ENCODE measurements at regions of chr20 and their contacts with region 1.

Region 1: DNA sequence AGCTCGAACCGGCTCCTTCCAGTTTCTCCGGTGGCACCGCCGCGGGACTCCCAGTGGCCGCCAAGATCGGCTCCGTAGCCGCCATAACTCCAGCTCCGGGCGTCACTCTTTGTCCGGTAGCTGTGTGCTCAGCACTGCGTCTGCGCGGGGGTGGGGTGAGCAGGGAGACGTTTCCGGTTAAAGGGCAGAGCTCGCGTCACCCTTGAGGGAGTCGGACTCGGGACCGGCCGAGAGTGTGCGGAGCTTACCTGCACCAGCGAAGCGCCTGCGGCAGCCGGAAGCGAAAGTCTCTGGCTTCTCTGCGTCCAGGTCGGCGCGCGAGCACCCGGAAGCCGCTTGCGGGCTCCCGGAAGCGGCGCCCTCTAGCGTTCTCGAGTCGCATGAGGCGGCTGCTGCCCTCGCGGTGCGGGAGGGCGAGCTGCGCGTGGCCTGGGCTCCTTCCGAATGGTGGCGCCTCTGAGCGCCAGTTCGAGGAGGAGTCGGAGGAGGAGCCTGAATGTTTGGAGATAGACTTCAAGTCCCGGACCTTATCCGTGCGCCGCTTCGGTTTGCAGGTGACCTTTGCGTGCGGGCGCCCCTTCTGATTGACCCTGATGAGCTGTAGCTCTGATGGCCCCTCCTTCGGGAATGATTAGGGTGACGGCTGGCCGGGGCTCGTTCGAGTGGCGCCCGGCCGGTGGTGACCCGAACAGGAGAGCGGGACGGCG is at the start of gene SCAND1:
- DNase-seq: peak; percentile 99
- ATAC-seq: peak; percentile 89
- H3K4me3 Mint-ChIP-seq: peak within 1 kb of the TSS; percentile 98
- H3K27ac Mint-ChIP-seq: peak within 1 kb of the TSS; percentile 100
- H3K4me1 Mint-ChIP-seq: peaks cover 16% of the 10 kb centered on the region
- H3K27me3 Mint-ChIP-seq: no peaks in the 10 kb centered on the region
- CTCF ChIP-seq: peak; percentile 93
- total RNA-seq, gene SCAND1: 46.4 to 49.2 TPM

Region 2: GRCh38 chr20:35741892-35742740 is 212.2 kb before region 1 on chr20 and contains the start of gene RBM39:
- CTCF ChIA-PET with region 1: interaction called, 20 read pairs
- POLR2A ChIA-PET with region 1: interaction called, 19 read pairs
- intact Hi-C with region 1: no loop called
- DNase-seq: peak; percentile 100
- ATAC-seq: peak; percentile 89
- H3K4me3 Mint-ChIP-seq: peak within 1 kb of the TSS; percentile 92
- H3K27ac Mint-ChIP-seq: peak within 1 kb of the TSS; percentile 99
- H3K4me1 Mint-ChIP-seq: peaks cover 38% of the 10 kb centered on the region
- H3K27me3 Mint-ChIP-seq: no peaks in the 10 kb centered on the region
- CTCF ChIP-seq: no peak
- total RNA-seq, gene RBM39: 317 to 321 TPM

Region 3: GRCh38 chr20:35771689-35772562 is 182.4 kb before region 1 on chr20 and contains the start of gene PHF20:
- CTCF ChIA-PET with region 1: interaction called, 11 read pairs
- POLR2A ChIA-PET with region 1: interaction called, 17 read pairs
- intact Hi-C with region 1: no loop called
- DNase-seq: peak; percentile 100
- ATAC-seq: peak; percentile 89
- H3K4me3 Mint-ChIP-seq: peak within 1 kb of the TSS; percentile 79
- H3K27ac Mint-ChIP-seq: peak within 1 kb of the TSS; percentile 90
- H3K4me1 Mint-ChIP-seq: peaks cover 68% of the 10 kb centered on the region
- H3K27me3 Mint-ChIP-seq: no peaks in the 10 kb centered on the region
- CTCF ChIP-seq: no peak
- total RNA-seq, gene PHF20: 57.9 to 58.8 TPM

Region 4: GRCh38 chr20:35893942-35894341 is 60.4 kb before region 1 on chr20:
- CTCF ChIA-PET with region 1: interaction called, 10 read pairs
- POLR2A ChIA-PET with region 1: no interaction called
- intact Hi-C with region 1: no loop called
- DNase-seq: peak; percentile 39
- ATAC-seq: peak; percentile 89
- H3K4me3 Mint-ChIP-seq: no peak overlapping the region
- H3K27ac Mint-ChIP-seq: no peak overlapping the region
- H3K4me1 Mint-ChIP-seq: peaks cover 22% of the 10 kb centered on the region
- H3K27me3 Mint-ChIP-seq: no peaks in the 10 kb centered on the region
- CTCF ChIP-seq: no peak

Region 5: GRCh38 chr20:35942243-35942642 is 12.1 kb before region 1 on chr20:
- CTCF ChIA-PET with region 1: interaction called, 34 read pairs
- POLR2A ChIA-PET with region 1: interaction called, 18 read pairs
- intact Hi-C with region 1: no loop called
- DNase-seq: no peak
- ATAC-seq: no peak
- H3K4me3 Mint-ChIP-seq: no peak overlapping the region
- H3K27ac Mint-ChIP-seq: no peak overlapping the region
- H3K4me1 Mint-ChIP-seq: no peaks in the 10 kb centered on the region
- H3K27me3 Mint-ChIP-seq: no peaks in the 10 kb centered on the region
- CTCF ChIP-seq: no peak

Region 6: GRCh38 chr20:35968931-35969330 is 14.6 kb after region 1 on chr20:
- CTCF ChIA-PET with region 1: interaction called, 17 read pairs
- POLR2A ChIA-PET with region 1: interaction called, 10 read pairs
- intact Hi-C with region 1: no loop called
- DNase-seq: no peak
- ATAC-seq: no peak
- H3K4me3 Mint-ChIP-seq: no peak overlapping the region
- H3K27ac Mint-ChIP-seq: no peak overlapping the region
- H3K4me1 Mint-ChIP-seq: no peaks in the 10 kb centered on the region
- H3K27me3 Mint-ChIP-seq: no peaks in the 10 kb centered on the region
- CTCF ChIP-seq: no peak

Region 7: DNA sequence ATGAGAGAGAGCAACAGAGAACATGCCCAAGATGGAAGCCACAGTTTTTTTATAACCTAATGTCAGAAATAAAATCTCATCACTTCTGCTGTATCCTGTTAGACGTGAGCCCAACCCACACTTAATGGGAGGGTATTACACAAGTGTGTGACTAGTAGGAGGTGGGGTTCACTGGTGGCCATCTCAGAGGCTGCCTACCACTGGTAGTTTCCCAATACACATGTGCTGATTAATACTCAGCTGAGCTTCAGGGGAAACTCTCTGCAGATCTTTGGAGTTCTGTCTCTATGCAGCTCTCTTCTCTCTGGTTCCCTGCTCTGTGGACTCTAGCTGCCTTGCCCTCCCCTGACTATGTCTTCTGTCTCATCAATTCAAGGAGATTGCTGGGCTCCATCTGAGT is 49.7 kb after region 1 on chr20:
- CTCF ChIA-PET with region 1: no interaction called
- POLR2A ChIA-PET with region 1: no interaction called
- intact Hi-C with region 1: no loop called
- DNase-seq: no peak
- ATAC-seq: no peak
- H3K4me3 Mint-ChIP-seq: no peak overlapping the region
- H3K27ac Mint-ChIP-seq: no peak overlapping the region
- H3K4me1 Mint-ChIP-seq: no peaks in the 10 kb centered on the region
- H3K27me3 Mint-ChIP-seq: no peaks in the 10 kb centered on the region
- CTCF ChIP-seq: no peak

Region 8: GRCh38 chr20:36121981-36122930 is 167.9 kb after region 1 on chr20:
- CTCF ChIA-PET with region 1: no interaction called
- POLR2A ChIA-PET with region 1: no interaction called
- intact Hi-C with region 1: no loop called
- DNase-seq: no peak
- ATAC-seq: no peak
- H3K4me3 Mint-ChIP-seq: no peak overlapping the region
- H3K27ac Mint-ChIP-seq: no peak overlapping the region
- H3K4me1 Mint-ChIP-seq: no peaks in the 10 kb centered on the region
- H3K27me3 Mint-ChIP-seq: peaks cover 3% of the 10 kb centered on the region
- CTCF ChIP-seq: no peak

Measured in activated CD8-positive, alpha-beta T cell treated with anti-CD3 and anti-CD28 coated beads for 36 hours (primary cell).